PC-3 (cell line): ENCODE measurements at regions of chr14 and their contacts with region 1.

Region 1: DNA sequence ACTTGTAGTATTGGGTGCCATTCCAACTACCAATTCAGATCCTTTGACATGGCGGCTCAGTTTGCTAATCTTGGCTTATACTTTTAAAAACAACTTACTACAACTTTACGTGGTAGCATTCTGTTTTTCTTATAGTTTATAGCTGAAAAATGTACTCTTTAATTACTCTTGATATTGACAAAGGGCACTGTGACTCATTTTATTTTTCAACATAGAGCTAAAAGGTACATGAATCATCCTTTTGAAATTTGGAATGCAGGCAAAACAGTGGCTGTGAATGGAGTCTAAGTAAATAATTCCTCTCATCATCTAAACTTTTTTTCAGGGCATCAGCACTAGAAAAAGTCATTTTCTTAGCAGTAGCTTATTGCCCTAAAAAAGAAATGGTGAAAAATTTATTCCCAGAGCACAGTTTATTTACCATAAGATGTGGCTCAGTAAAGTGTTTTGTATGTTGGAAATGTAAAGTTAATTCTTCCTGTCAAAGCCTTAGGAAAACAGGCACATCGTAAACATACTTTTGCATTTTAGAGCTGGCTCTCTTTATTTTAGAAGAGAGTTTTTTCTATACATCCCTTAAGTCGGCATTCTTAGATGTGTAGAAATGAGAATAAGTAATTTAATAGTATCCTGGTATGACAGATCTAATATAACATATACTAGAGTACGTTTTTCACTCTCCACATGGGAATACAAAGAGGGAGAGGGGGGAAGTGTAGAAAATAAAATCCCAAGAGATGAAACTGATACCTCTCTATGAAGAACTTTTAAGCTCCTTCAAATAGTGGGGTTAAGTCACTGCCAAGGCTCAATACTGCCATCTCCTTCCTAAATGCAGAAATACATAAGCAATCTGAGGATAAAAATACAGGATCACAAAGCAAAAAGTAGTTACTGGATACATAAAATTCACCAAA is 55.2 kb downstream of the SLC25A21 start:
- DNase-seq: peak; percentile 95
- ATAC-seq: peak; percentile 61
- H3K4me3 ChIP-seq: peak overlapping the region; percentile 37
- H3K27ac ChIP-seq: peak overlapping the region; percentile 88
- H3K4me1 ChIP-seq: peaks cover 57% of the 10 kb centered on the region
- H3K27me3 ChIP-seq: no peaks in the 10 kb centered on the region
- CTCF ChIP-seq: peak; percentile 84

Region 2: DNA sequence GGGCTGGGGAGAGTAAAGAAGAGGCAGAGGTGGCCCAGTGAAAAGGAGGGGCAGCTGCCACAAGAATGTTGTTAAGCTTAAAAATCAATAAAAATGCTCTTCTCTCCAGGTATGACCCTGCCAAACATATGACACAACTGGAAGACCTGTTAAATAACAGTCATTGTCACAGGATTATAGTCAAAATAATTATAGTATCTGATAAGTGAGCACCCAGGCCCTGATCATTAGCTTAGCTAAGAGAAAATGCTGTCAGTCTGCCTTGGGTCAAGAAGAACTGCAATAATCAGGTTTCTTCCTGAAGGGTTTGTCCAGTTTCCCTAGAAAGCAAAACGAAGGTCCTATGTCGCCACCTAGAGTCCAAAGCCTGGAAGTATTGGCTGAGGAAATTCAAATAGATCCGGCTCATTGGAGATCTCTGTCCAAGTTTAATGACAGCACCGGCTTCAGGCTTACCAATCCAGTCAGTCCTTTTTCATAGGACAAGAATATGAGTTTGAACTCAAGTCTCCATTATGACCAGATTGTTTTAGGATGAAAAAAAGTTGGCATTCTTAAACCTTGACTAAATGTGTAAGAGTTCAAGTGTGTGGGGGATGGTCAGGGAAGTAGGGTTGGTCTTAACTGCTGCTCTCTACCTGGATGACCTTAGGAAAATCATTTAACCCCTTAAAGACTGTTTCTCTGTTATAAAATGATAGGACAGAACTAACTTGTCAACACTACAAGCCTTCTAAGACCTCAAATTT is 512.3 kb before region 1 on chr14:
- CTCF ChIA-PET with region 1: interaction called, 11 read pairs
- POLR2A ChIA-PET with region 1: no interaction called
- intact Hi-C with region 1: no loop called
- DNase-seq: peak; percentile 90
- ATAC-seq: peak; percentile 84
- H3K4me3 ChIP-seq: no peak overlapping the region
- H3K27ac ChIP-seq: no peak overlapping the region
- H3K4me1 ChIP-seq: no peaks in the 10 kb centered on the region
- H3K27me3 ChIP-seq: peaks cover 42% of the 10 kb centered on the region
- CTCF ChIP-seq: peak; percentile 87

Region 3: DNA sequence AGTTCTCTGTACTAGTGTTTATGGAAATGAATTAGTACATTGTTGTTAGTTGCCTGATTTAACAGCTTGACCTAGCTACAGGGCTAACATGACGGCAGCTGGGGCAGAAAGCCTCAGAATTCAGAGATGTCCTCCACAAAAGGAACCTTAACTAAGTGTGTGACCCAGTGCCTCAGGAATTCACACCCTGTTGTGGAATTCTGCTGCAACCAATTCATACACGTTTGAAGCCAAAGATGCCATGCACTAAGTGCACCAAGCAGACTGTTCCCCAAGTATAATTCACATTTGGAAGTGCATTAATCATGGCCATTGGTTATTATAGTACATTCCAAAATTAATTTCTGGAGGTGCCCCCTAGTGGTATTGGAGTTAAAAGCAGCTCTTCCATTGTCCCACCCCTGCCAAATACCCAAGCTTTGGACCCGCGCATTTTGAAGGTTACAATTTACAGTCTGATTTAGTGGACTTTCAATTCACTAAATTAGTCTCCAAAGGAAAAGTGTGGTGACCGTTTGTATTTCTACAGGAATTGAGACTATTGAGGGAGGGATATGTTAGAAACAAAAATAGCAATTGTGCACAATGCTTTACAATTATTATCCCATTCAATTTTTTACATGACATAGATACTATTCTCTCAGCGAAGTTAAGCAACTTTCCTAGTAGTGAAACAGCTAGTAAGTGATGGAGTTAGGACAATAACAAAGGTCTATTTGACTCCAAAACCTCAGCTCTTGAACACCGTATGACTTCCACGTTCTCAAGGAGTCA is 369.6 kb before region 1 on chr14:
- CTCF ChIA-PET with region 1: interaction called, 3 read pairs
- POLR2A ChIA-PET with region 1: interaction called, 4 read pairs
- intact Hi-C with region 1: loop called (anchors 2 kb)
- DNase-seq: peak; percentile 66
- ATAC-seq: peak; percentile 60
- H3K4me3 ChIP-seq: no peak overlapping the region
- H3K27ac ChIP-seq: no peak overlapping the region
- H3K4me1 ChIP-seq: peaks cover 18% of the 10 kb centered on the region
- H3K27me3 ChIP-seq: no peaks in the 10 kb centered on the region
- CTCF ChIP-seq: peak; percentile 92

Region 4: GRCh38 chr14:36829547-36829946 is 287.6 kb before region 1 on chr14:
- CTCF ChIA-PET with region 1: no interaction called
- POLR2A ChIA-PET with region 1: no interaction called
- intact Hi-C with region 1: no loop called
- DNase-seq: no peak
- ATAC-seq: no peak
- H3K4me3 ChIP-seq: no peak overlapping the region
- H3K27ac ChIP-seq: no peak overlapping the region
- H3K4me1 ChIP-seq: no peaks in the 10 kb centered on the region
- H3K27me3 ChIP-seq: no peaks in the 10 kb centered on the region
- CTCF ChIP-seq: no peak

Region 5: GRCh38 chr14:36901861-36902260 is 215.3 kb before region 1 on chr14:
- CTCF ChIA-PET with region 1: interaction called, 8 read pairs
- POLR2A ChIA-PET with region 1: no interaction called
- intact Hi-C with region 1: loop called (anchors 1 kb)
- DNase-seq: peak; percentile 87
- ATAC-seq: peak; percentile 96
- H3K4me3 ChIP-seq: no peak overlapping the region
- H3K27ac ChIP-seq: peak overlapping the region; percentile 62
- H3K4me1 ChIP-seq: peaks cover 16% of the 10 kb centered on the region
- H3K27me3 ChIP-seq: no peaks in the 10 kb centered on the region
- CTCF ChIP-seq: no peak

Region 6: DNA sequence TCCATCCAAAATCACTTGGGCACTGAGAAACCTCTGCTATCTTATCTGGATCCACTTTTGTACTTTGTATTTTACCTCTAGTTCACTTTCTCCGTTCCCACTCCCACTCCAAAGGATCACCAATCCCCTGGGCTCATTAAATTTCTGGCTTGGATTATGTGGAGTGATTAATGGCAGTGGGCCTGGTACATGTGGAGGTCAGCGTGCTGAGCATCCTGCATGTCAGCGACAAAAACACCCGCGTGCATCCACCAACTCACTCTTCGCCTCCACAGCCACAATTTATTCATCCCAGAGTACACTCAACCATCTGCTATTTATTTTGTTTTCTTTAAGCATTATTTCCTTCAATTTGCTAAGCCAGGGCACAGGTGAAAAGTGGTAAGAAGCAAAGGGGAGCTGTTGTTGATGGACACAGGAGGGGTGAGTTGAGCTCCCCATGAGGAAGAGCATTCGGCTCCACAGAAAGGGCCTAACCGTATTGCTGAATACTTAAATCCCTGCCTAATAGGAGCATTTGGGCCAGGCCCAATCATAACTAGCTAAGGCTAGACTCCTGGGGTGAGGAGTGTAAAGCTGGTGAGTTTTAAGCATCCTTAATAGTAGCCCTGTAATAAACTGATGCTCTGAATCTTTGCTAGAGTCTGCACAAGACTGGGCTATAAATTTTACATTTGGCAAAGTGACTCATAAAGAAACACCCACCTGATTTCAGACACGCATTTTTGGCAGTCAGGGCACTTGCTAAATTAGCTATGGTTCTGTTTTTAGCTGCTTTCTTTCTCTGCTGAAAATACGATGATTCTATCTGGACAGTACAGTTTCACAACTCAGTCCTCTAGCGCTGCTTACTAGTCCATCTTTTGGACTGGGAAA is 82.5 kb before region 1 on chr14:
- CTCF ChIA-PET with region 1: interaction called, 5 read pairs
- POLR2A ChIA-PET with region 1: no interaction called
- intact Hi-C with region 1: loop called (anchors 1 kb)
- DNase-seq: no peak
- ATAC-seq: no peak
- H3K4me3 ChIP-seq: no peak overlapping the region
- H3K27ac ChIP-seq: no peak overlapping the region
- H3K4me1 ChIP-seq: peaks cover 30% of the 10 kb centered on the region
- H3K27me3 ChIP-seq: no peaks in the 10 kb centered on the region
- CTCF ChIP-seq: no peak

Region 7: GRCh38 chr14:37150414-37150813 is 33.2 kb after region 1 on chr14:
- CTCF ChIA-PET with region 1: interaction called, 8 read pairs
- POLR2A ChIA-PET with region 1: interaction called, 6 read pairs
- intact Hi-C with region 1: loop called (anchors 1 kb)
- DNase-seq: peak; percentile 76
- ATAC-seq: peak; percentile 82
- H3K4me3 ChIP-seq: no peak overlapping the region
- H3K27ac ChIP-seq: no peak overlapping the region
- H3K4me1 ChIP-seq: peaks cover 5% of the 10 kb centered on the region
- H3K27me3 ChIP-seq: no peaks in the 10 kb centered on the region
- CTCF ChIP-seq: peak; percentile 90